B cell (primary cell): ENCODE measurements at regions of chr10 and their contacts with region 1.

Region 1: GRCh38 chr10:122298598-122299301 is 27.7 kb downstream of the BTBD16 start:
- DNase-seq: peak; percentile 75
- ATAC-seq: peak; percentile 88
- H3K4me3 ChIP-seq: no peak overlapping the region
- H3K4me3 Mint-ChIP-seq: no peak overlapping the region
- H3K27ac ChIP-seq: no peak overlapping the region
- H3K27ac Mint-ChIP-seq: no peak overlapping the region
- H3K4me1 ChIP-seq: peaks cover 3 to 4% of the 10 kb centered on the region in 2 donors
- H3K4me1 Mint-ChIP-seq: peaks cover 3% of the 10 kb centered on the region
- H3K27me3 ChIP-seq: peaks cover 0 to 4% (median 0%) of the 10 kb centered on the region in 4 experiments
- H3K27me3 Mint-ChIP-seq: peaks cover 20% of the 10 kb centered on the region
- CTCF ChIP-seq: peak; percentile 91

Region 2: GRCh38 chr10:122565728-122566206 is 267.0 kb after region 1 on chr10:
- CTCF ChIA-PET with region 1: interaction called, 44 read pairs
- POLR2A ChIA-PET with region 1: no interaction called
- intact Hi-C with region 1: no loop called
- DNase-seq: peak; percentile 52
- ATAC-seq: no peak
- H3K4me3 ChIP-seq: no peak overlapping the region
- H3K4me3 Mint-ChIP-seq: no peak overlapping the region
- H3K27ac ChIP-seq: no peak overlapping the region
- H3K27ac Mint-ChIP-seq: no peak overlapping the region
- H3K4me1 ChIP-seq: no peaks in the 10 kb centered on the region
- H3K4me1 Mint-ChIP-seq: no peaks in the 10 kb centered on the region
- H3K27me3 ChIP-seq: peaks cover 0 to 16% (median 4%) of the 10 kb centered on the region in 4 experiments
- H3K27me3 Mint-ChIP-seq: peaks cover 39% of the 10 kb centered on the region
- CTCF ChIP-seq: peak; percentile 62